ENCODE measurements at regions of chr5 and their contacts with region 1.

Region 1: GRCh38 chr5:139482050-139482889 is at the start of gene STING1:
- DNase-seq: peak; percentile 76
- ATAC-seq: peak; percentile 90
- H3K4me3 Mint-ChIP-seq: peak within 1 kb of the TSS; percentile 79
- H3K27ac Mint-ChIP-seq: peak within 1 kb of the TSS; percentile 94
- H3K4me1 Mint-ChIP-seq: peaks cover 38% of the 10 kb centered on the region
- H3K27me3 Mint-ChIP-seq: no peaks in the 10 kb centered on the region
- total RNA-seq, gene STING1: 64.9 to 67.4 TPM

Region 2: DNA sequence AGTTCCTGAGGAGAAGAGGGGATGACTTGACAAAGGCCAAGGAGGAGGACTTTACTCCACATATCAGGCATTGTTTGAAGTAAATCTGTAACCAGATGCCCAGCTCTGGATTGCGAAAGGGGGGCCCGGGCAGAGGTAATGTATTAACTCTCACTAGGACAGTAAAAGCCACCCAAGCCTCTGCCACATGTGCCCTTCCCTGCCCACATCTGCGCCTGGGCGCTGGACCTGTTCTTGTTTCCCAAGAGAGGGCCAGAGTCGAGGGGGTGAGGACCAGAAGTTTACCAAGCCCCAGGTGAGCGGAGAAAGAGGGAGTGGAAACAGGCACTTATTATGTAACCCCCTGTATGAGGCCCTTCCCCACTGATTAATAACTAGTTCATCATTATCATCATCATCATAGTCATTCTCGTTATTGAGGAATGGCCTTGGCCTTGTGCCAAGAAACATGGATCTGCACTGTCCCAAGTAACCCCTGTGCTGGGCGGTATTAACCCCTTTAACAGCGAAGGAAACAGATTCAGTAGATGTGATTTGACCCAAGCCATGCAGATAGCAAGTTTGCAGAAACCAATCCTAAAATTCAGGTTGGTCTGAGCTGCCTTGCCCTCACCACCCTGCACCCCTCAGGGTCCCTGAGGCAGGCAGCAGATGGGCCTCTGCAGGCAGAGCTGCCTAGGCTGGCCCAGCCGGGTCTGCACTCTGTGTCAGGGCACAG is 98.8 kb before region 1 on chr5 and contains the start of gene SLC23A1:
- CTCF ChIA-PET with region 1: no interaction called
- POLR2A ChIA-PET with region 1: no interaction called
- DNase-seq: no peak
- ATAC-seq: no peak
- H3K4me3 Mint-ChIP-seq: no peak within 1 kb of the TSS
- H3K27ac Mint-ChIP-seq: peak within 1 kb of the TSS; percentile 96
- H3K4me1 Mint-ChIP-seq: peaks cover 54% of the 10 kb centered on the region
- H3K27me3 Mint-ChIP-seq: no peaks in the 10 kb centered on the region
- total RNA-seq, gene SLC23A1: 1.2 to 1.5 TPM

Region 3: DNA sequence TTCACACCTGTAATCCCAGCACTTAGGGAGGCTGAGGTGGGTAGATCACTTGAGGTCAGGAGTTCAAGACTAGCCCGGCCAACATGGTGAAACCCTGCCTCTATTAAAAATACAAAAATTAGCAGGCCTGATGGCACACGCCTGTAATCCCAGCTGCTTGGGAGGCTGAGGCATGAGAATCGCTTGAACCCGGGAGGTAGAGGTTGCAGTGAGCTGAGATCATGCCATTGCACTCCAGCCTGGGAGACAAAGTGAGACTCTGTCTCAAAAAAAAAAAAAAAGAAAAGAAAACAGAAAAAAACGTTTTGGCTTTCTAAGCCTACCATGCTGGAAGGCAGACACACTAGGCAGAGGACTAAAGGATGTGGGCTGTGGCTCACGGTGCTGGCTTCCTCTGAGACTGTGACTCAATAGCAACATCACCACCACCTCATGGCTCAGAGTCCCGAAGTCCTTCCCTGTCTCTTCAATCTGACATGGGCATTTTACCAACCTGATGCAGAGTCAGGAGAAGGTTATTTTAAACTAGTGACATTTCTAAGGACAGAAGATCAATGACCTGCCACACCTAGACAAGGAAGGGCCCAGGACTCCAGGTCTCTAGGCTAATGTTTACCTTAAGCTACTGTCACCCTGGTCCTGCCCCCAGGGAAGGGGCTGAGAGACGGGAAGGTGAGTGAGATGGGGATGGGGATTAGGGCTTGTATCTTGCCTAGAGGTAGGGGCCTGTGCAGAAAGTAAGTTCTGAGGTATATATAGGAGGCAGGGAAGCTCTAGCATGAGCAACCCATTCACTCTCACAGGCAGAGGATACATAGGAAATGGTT is 23.5 kb before region 1 on chr5:
- CTCF ChIA-PET with region 1: interaction called, 16 read pairs
- POLR2A ChIA-PET with region 1: interaction called, 35 read pairs
- DNase-seq: peak; percentile 92
- ATAC-seq: peak; percentile 92
- H3K4me3 Mint-ChIP-seq: peak overlapping the region; percentile 67
- H3K27ac Mint-ChIP-seq: peak overlapping the region; percentile 97
- H3K4me1 Mint-ChIP-seq: peaks cover 63% of the 10 kb centered on the region
- H3K27me3 Mint-ChIP-seq: peaks cover 14% of the 10 kb centered on the region

Region 4: GRCh38 chr5:139492700-139493192 is 10.5 kb after region 1 on chr5:
- CTCF ChIA-PET with region 1: interaction called, 14 read pairs
- POLR2A ChIA-PET with region 1: interaction called, 5 read pairs
- DNase-seq: no peak
- ATAC-seq: no peak
- H3K4me3 Mint-ChIP-seq: no peak overlapping the region
- H3K27ac Mint-ChIP-seq: peak overlapping the region; percentile 20
- H3K4me1 Mint-ChIP-seq: peaks cover 28% of the 10 kb centered on the region
- H3K27me3 Mint-ChIP-seq: peaks cover 2% of the 10 kb centered on the region

Measured in activated CD8-positive, alpha-beta T cell treated with anti-CD3 and anti-CD28 coated beads, Interleukin-2, amount 10 ng/mL, durations not matched to agents 7 days and 5 days (primary cell).